ENCODE measurements at regions of chr15 and their contacts with region 1.

Region 1: DNA sequence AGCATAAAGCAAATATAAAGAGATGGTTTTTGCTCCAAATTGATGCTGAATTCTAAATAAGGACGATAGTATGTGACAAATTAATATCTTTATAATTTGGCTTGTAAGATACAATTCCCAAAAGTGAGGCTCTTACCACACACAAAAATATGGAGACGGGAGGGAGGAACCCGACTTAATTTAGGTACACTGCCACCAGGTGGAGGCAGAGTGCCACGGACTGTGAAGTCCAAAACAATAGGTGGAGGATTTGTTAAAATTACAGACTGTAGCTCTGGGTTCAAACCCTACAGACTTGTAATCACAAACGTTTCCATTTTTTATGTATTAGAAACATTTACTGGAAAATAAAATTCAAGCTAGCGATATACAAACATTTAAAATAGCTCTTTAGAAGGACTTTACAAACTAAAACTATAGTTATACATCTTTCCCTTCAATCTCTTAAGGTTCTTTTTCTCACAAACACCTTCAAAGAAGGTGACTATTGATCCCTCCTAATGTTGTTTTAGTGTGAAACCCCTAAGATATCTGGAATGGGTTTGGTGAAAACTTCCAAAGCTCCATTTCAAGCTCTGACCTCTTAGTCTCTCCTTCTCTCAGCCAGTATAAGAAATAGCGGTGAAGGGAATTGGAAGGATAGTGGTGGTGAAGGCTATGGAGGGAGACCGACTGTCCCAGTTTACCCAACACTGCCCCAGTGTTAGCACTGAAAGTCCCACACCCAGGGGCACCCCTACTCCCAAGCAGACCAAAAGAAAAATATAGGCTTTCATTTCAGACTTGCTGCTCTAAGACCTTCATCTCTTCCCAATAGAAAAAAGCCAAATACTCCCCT is 89.7 kb downstream of the AQP9 start:
- DNase-seq: peak; percentile 31
- H3K4me3 ChIP-seq: no peak overlapping the region
- CTCF ChIP-seq: peak; percentile 74

Region 2: GRCh38 chr15:58036579-58036978 is 191.3 kb before region 1 on chr15:
- CTCF ChIA-PET with region 1: no interaction called
- POLR2A ChIA-PET with region 1: no interaction called
- DNase-seq: no peak
- H3K4me3 ChIP-seq: no peak overlapping the region
- CTCF ChIP-seq: no peak

Region 3: DNA sequence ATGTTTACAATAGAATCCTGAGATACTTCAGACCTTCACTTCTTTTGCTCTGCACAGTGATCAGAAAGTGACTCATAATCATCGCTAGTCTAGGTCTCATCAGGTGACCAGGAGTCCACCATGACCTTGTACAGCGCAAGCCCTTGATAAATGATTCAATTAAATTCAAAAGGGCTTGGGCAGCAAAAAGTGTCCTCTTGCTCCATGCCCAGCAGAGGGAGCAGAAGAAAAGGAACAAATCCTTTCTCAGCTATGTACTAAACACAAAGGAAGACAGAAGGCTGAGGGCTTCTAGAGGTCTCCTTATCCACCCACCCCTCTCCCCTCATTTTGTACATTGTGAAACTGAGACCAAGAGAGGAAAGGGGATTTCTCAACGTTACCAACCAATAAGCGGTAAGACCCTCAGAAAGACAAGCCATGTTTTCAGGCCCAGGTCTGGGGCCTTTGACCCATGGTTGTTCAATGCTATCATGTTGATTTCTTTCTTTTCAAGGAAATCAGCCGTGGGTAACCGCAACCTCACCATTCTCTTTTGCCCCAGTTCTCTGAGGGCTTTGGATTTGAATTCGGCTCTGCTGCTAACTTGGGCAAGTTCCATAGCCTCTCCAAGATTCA is 14.9 kb before region 1 on chr15:
- CTCF ChIA-PET with region 1: interaction called, 28 read pairs
- POLR2A ChIA-PET with region 1: no interaction called
- DNase-seq: no peak
- H3K4me3 ChIP-seq: no peak overlapping the region
- CTCF ChIP-seq: peak; percentile 52

Region 4: DNA sequence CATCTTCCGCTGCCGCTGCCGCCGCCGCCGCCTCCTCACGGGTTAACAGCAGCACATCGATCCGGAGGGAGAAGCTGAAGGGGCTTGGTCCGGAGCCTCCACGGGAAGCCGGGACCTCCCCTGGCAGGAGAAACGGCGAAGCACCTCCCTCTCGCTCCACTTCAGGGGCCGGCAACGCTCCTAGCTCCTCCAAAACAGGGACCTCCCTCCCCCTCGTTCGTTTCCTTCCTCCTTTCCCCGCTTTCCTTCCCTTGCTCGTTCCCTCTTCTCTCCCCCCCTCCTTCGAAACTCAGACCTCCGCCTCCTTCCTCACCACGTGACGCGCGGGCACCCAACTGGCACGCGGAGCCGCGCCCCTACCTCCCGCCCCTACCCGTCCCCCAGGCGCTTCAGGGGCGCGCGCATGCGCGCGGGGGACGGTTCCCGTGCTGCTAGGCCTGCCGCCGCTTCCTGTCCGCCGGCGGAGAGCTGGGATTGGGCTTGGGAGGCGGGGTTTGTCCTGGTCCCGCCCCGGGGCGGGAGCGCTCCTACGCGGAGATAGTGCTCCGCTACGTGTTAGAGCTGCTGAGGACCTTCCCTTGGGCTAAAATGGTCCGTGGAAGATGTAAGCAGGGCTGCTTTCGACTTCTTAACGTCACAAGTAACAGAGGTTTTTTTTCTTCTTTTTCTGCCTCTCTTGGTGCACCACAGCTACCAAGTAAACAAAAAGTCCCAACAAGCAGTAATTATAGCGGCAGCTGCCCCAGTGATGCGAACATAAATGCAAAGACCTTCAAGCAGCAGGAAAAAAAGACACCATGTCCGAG is 521.8 kb after region 1 on chr15 and contains the start of gene ADAM10:
- CTCF ChIA-PET with region 1: interaction called, 13 read pairs
- POLR2A ChIA-PET with region 1: interaction called, 4 read pairs
- DNase-seq: peak; percentile 84
- H3K4me3 ChIP-seq: peak within 1 kb of the TSS; percentile 82
- CTCF ChIP-seq: no peak

Region 5: DNA sequence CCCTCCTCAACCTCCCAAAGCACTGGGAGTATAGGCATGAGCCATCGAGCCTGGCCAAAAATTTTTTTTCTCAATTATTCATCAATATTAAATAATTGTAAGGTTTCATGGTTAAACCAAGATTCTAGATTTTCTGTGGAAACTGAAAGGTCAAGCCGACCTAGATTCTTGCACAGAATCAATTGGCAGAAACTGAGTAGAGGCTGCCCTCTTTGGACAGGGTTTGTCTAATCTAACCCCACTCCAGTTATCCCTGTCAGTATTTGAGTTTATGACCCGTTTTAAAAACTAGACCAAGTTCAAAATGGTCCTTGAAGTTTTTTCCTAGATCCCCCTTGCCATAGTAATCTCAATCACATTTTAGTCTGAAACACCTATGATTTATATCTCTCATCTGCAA is 530.2 kb after region 1 on chr15:
- CTCF ChIA-PET with region 1: interaction called, 15 read pairs
- POLR2A ChIA-PET with region 1: no interaction called
- DNase-seq: no peak
- H3K4me3 ChIP-seq: no peak overlapping the region
- CTCF ChIP-seq: peak; percentile 18

Measured in AG04449 (cell line).